Naive thymus-derived CD4-positive, alpha-beta T cell (primary cell): ENCODE measurements at regions of chr2 and their contacts with region 1.

Region 1: DNA sequence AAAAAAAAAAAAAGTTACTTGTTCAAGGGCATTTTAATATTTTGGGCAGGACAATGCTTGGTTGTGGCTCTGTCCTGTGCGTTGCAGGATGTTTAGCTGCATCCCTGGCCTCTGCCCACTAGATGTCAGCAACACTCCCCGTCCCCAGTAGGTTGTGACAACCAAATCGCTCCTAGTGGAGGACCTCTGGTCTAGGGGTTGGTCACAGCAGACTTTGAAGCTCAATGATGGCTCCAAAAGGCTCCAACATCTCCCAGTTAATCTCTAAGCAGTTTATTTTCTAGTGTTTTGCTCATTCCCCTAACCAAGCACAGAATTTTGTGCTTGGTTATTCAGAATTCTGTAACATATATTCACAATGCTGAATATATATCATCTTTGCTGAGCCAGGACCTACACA is 67.0 kb downstream of the CHRNA1 start:
- DNase-seq: peak in 8 of 9 donors; percentile 38 to 60 (median 49)
- ATAC-seq: peak; percentile 93
- H3K4me3 ChIP-seq: no peak overlapping the region
- H3K4me3 Mint-ChIP-seq: no peak overlapping the region
- H3K27ac ChIP-seq: no peak overlapping the region
- H3K27ac Mint-ChIP-seq: peak overlapping the region in 1 of 9 donors; percentile 55
- H3K4me1 ChIP-seq: no peaks in the 10 kb centered on the region
- H3K4me1 Mint-ChIP-seq: peaks cover 0 to 7% (median 0%) of the 10 kb centered on the region in 7 donors
- H3K27me3 ChIP-seq: no peaks in the 10 kb centered on the region
- H3K27me3 Mint-ChIP-seq: peaks cover 0 to 40% (median 0%) of the 10 kb centered on the region in 5 donors

Region 2: GRCh38 chr2:172869861-172870260 is 1827.4 kb before region 1 on chr2:
- CTCF ChIA-PET with region 1: no interaction called
- POLR2A ChIA-PET with region 1: no interaction called
- intact Hi-C with region 1: no loop called
- DNase-seq: no peak
- ATAC-seq: no peak
- H3K4me3 ChIP-seq: no peak overlapping the region
- H3K4me3 Mint-ChIP-seq: no peak overlapping the region
- H3K27ac ChIP-seq: no peak overlapping the region
- H3K27ac Mint-ChIP-seq: no peak overlapping the region
- H3K4me1 ChIP-seq: no peaks in the 10 kb centered on the region
- H3K4me1 Mint-ChIP-seq: peaks cover 0 to 4% (median 0%) of the 10 kb centered on the region in 7 donors
- H3K27me3 ChIP-seq: no peaks in the 10 kb centered on the region
- H3K27me3 Mint-ChIP-seq: peaks cover 0 to 5% (median 0%) of the 10 kb centered on the region in 5 donors

Region 3: DNA sequence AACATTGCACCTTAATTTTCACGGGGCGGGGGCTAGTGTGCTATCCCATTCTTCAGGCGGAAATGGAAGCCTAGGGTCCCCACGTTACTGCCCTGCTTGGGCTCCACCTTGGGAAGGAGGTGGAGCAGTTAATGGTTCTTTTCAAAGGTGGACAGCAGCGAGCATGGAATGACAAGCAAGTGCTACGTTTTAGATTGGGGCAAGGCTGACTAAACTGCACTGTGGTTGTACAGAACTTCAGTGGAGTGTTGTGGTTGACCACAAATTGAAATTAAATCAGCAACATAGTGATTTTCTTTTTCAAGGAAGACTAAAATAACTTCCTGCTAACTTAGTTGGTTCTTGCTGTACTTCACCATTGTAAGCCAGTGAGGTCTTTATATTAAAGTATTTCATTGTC is 20.0 kb after region 1 on chr2:
- CTCF ChIA-PET with region 1: interaction called, 3 read pairs
- POLR2A ChIA-PET with region 1: no interaction called
- intact Hi-C with region 1: loop called (anchors 1 kb)
- DNase-seq: peak in 8 of 9 donors; percentile 34 to 76 (median 69)
- ATAC-seq: peak; percentile 75
- H3K4me3 ChIP-seq: peak overlapping the region; percentile 39
- H3K4me3 Mint-ChIP-seq: peak overlapping the region; percentile 63 to 88 (median 76)
- H3K27ac ChIP-seq: no peak overlapping the region
- H3K27ac Mint-ChIP-seq: peak overlapping the region; percentile 4 to 68 (median 25)
- H3K4me1 ChIP-seq: peaks cover 15 to 21% of the 10 kb centered on the region in 2 donors
- H3K4me1 Mint-ChIP-seq: peaks cover 21 to 41% (median 36%) of the 10 kb centered on the region in 7 donors
- H3K27me3 ChIP-seq: no peaks in the 10 kb centered on the region
- H3K27me3 Mint-ChIP-seq: peaks cover 0 to 10% (median 0%) of the 10 kb centered on the region in 5 donors

Region 4: DNA sequence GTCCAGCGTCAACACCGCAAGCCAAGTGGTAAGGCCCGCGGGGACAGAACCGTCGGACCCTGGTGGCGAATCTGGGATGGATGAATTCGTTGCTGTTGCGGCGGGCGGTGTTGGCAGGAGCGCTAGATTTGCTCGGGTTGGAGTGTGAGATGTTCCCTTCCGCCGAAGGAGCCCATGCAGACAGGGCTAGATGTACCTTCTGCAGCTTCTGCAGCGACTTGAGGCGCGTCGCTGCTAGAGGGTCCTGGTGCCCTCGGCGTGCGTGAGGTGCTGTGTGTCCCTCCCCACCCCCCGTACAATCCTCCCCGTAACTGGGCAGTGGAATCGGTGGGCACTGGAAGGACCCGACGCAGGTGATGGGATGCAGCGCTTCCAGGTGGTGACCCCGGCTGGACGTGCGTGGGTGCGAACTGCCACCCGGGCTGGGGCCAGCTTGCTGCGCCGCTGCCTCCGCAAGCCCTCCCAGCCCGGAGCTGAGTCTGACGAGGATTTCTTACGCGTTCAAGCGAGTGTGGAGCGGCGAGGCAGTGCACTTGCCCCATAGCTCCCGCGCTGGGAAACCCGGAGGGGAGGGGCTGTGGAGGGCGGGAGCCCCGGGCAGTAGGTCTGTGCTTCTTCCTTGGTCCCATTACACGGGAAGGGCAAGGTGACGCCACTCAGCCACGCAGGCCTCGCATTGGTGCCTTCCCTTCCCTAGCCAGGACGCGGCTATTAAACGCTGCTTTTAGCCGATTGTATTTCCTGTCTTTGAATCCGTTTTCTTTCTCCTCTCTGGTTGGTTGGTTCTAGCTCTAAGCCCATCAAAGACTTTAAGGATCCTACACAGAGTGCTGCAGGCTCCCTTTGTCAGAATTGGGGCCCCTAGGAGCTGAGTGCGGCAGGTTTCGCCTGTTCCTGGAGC is 32.8 kb after region 1 on chr2:
- CTCF ChIA-PET with region 1: interaction called, 11 read pairs
- POLR2A ChIA-PET with region 1: no interaction called
- intact Hi-C with region 1: loop called in 1 of 2 experiments (anchors 1 kb)
- DNase-seq: peak; percentile 21 to 53 (median 37)
- ATAC-seq: peak; percentile 76
- H3K4me3 ChIP-seq: peak overlapping the region; percentile 75
- H3K4me3 Mint-ChIP-seq: peak overlapping the region; percentile 84 to 96 (median 89)
- H3K27ac ChIP-seq: no peak overlapping the region
- H3K27ac Mint-ChIP-seq: peak overlapping the region in 5 of 9 donors; percentile 35 to 84 (median 57)
- H3K4me1 ChIP-seq: peaks cover 3 to 4% of the 10 kb centered on the region in 2 donors
- H3K4me1 Mint-ChIP-seq: peaks cover 6 to 28% (median 20%) of the 10 kb centered on the region in 7 donors
- H3K27me3 ChIP-seq: no peaks in the 10 kb centered on the region
- H3K27me3 Mint-ChIP-seq: peaks cover 0 to 71% (median 12%) of the 10 kb centered on the region in 5 donors

Region 5: DNA sequence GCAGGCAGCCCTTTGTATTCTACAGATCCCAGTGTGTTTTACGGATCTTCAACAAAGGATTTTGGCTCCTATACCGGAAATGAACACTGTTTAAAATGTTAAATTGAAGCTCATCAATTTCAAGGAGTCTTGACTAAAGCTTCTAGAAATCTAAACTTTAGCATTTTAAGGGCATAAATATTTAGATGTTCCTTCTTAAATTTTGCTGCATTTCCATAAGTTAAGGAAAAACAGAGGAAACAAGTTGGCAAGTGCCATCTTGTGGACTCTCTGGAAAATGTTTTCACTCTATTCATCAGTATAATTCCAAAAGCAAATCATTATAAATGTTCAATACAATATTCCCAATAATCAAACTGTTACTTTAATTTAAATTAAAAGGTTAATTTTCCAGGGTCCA is 288.4 kb after region 1 on chr2:
- CTCF ChIA-PET with region 1: interaction called, 45 read pairs
- POLR2A ChIA-PET with region 1: interaction called, 3 read pairs
- intact Hi-C with region 1: loop called (anchors 1 to 2 kb)
- DNase-seq: no peak
- ATAC-seq: no peak
- H3K4me3 ChIP-seq: no peak overlapping the region
- H3K4me3 Mint-ChIP-seq: no peak overlapping the region
- H3K27ac ChIP-seq: no peak overlapping the region
- H3K27ac Mint-ChIP-seq: no peak overlapping the region
- H3K4me1 ChIP-seq: no peaks in the 10 kb centered on the region
- H3K4me1 Mint-ChIP-seq: peaks cover 0 to 9% (median 7%) of the 10 kb centered on the region in 7 donors
- H3K27me3 ChIP-seq: no peaks in the 10 kb centered on the region
- H3K27me3 Mint-ChIP-seq: peaks cover 0 to 25% (median 5%) of the 10 kb centered on the region in 5 donors

Region 6: DNA sequence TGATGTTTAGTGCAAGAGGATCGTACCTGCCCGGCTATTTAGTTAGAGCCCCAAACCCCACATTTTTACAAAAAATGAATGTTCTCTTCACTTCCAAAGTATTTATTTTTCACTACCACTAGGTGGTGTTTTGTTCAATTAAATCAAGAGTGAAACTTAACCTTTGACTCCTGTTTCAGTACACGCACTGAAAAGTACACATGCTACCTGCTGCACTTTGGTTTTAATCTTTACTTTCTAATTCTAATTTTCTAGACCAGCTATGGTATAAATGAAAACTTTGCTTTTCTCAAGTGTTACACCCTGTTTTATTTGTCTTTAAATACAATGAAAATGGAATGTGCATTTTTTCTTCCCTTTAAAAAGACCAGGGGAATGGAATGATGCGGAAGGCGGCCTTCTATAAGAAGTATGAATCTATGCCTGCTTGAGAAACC is 339.3 kb after region 1 on chr2:
- CTCF ChIA-PET with region 1: no interaction called
- POLR2A ChIA-PET with region 1: no interaction called
- intact Hi-C with region 1: loop called in 1 of 2 experiments (anchors 1 kb)
- DNase-seq: peak in 6 of 9 donors; percentile 22 to 56 (median 44)
- ATAC-seq: peak; percentile 81
- H3K4me3 ChIP-seq: no peak overlapping the region
- H3K4me3 Mint-ChIP-seq: peak overlapping the region in 9 of 10 donors; percentile 42 to 79 (median 70)
- H3K27ac ChIP-seq: no peak overlapping the region
- H3K27ac Mint-ChIP-seq: peak overlapping the region in 8 of 9 donors; percentile 49 to 91 (median 70)
- H3K4me1 ChIP-seq: no peaks in the 10 kb centered on the region
- H3K4me1 Mint-ChIP-seq: peaks cover 4 to 20% (median 14%) of the 10 kb centered on the region in 7 donors
- H3K27me3 ChIP-seq: no peaks in the 10 kb centered on the region
- H3K27me3 Mint-ChIP-seq: peaks cover 0 to 2% (median 0%) of the 10 kb centered on the region in 5 donors

Region 7: DNA sequence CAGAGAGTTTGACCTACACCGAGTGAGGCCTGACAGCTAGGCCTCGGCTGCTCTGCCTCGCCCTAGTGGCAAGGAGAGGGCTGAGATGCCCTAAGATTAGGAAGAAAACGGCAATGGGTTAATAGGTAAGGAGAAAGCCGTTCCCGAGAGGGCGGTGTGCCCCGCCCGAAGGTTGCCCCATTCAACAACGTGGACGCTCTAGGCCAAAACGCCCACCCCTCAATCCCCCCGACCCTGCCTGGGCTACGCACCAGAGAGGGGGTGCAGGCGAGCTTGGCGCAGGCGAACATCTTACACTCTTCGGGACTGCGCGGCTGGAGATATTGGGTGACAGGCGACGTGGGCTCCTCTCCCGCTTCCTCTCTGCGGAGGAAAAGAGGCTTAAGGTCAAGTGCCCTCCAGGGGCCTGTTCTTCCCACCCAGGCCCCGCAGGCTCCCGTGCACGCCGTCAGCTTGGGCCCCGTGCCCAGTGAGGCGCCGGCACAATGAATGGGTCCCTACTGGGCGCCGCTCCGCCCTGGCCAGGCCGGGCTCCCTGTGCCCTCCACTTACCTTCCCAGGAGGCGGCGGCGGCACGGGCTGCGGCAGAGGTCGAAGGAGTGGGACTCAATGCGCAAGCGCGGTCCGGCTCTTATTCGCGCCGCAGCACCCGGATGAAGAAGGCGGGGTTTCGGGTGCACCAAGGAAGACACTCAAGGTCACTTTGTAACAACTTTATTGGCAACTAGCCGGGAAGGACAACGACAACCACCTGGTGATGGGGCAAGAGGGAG is 484.0 kb after region 1 on chr2 and contains the start of gene ATP5MC3:
- CTCF ChIA-PET with region 1: no interaction called
- POLR2A ChIA-PET with region 1: no interaction called
- intact Hi-C with region 1: loop called (anchors 10 kb)
- DNase-seq: peak; percentile 83 to 92 (median 89)
- ATAC-seq: peak; percentile 93
- H3K4me3 ChIP-seq: peak within 1 kb of the TSS; percentile 84
- H3K4me3 Mint-ChIP-seq: peak within 1 kb of the TSS; percentile 77 to 96 (median 88)
- H3K27ac ChIP-seq: peak within 1 kb of the TSS; percentile 89
- H3K27ac Mint-ChIP-seq: peak within 1 kb of the TSS; percentile 86 to 99 (median 93)
- H3K4me1 ChIP-seq: peaks cover 6 to 13% of the 10 kb centered on the region in 2 donors
- H3K4me1 Mint-ChIP-seq: peaks cover 14 to 39% (median 32%) of the 10 kb centered on the region in 7 donors
- H3K27me3 ChIP-seq: no peaks in the 10 kb centered on the region
- H3K27me3 Mint-ChIP-seq: no peaks in the 10 kb centered on the region
- total RNA-seq, gene ATP5MC3: 70.3 to 220 (median 77.6) TPM

Region 8: DNA sequence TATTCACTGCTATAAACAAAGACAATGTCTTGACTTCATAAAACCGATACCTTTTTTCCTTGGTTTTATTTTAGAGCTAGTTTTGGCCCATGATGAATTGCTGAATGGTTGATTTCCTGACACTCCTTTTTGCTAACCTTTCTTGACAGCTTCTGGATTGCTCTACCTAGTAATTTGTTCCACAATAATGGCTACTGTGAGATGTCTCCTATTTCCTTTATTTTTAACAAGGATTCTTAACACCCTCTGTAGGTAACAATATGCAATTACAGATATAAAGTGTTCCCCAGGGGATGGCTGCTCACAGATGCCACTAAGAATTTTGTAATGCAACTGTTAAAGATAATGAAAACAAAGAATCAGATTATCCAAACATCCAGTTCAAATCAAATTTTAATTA is 585.0 kb after region 1 on chr2:
- CTCF ChIA-PET with region 1: interaction called, 3 read pairs
- POLR2A ChIA-PET with region 1: no interaction called
- intact Hi-C with region 1: loop called in 1 of 2 experiments (anchors 2 kb)
- DNase-seq: peak in 5 of 9 donors; percentile 4 to 16 (median 7)
- ATAC-seq: peak; percentile 61
- H3K4me3 ChIP-seq: no peak overlapping the region
- H3K4me3 Mint-ChIP-seq: no peak overlapping the region
- H3K27ac ChIP-seq: no peak overlapping the region
- H3K27ac Mint-ChIP-seq: no peak overlapping the region
- H3K4me1 ChIP-seq: no peaks in the 10 kb centered on the region
- H3K4me1 Mint-ChIP-seq: no peaks in the 10 kb centered on the region
- H3K27me3 ChIP-seq: no peaks in the 10 kb centered on the region
- H3K27me3 Mint-ChIP-seq: peaks cover 0 to 15% (median 3%) of the 10 kb centered on the region in 5 donors